ENCODE measurements at regions of chr17 and their contacts with region 1.

Region 1: GRCh38 chr17:40264458-40265185 is 23.1 kb upstream of the CDC6 start:
- DNase-seq: no peak
- H3K4me3 Mint-ChIP-seq: no peak overlapping the region
- H3K27ac Mint-ChIP-seq: no peak overlapping the region
- H3K4me1 Mint-ChIP-seq: no peaks in the 10 kb centered on the region
- H3K27me3 Mint-ChIP-seq: no peaks in the 10 kb centered on the region
- CTCF ChIP-seq: no peak

Region 2: DNA sequence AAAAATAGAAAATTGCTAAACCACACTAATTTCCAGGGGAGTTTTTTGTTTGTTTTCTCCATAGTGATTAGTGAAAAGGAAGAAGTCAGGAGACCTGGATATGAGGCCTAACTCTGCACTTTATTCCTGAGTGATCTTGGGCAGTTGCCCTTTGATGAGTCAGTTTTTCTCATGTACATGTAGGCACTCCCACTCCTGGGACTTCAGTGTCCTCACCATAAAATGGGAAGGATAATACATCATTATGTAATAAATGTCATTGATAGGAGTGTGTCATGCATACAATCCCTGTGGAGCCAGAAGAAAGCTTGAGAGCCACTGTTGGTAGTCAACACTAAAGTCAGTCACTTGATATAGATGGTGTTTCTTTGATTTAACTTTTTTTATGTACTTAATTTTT is 13.0 kb before region 1 on chr17:
- CTCF ChIA-PET with region 1: interaction called, 5 read pairs
- intact Hi-C with region 1: loop called (anchors 2 kb)
- DNase-seq: no peak
- H3K4me3 Mint-ChIP-seq: no peak overlapping the region
- H3K27ac Mint-ChIP-seq: peak overlapping the region; percentile 10
- H3K4me1 Mint-ChIP-seq: peaks cover 30% of the 10 kb centered on the region
- H3K27me3 Mint-ChIP-seq: no peaks in the 10 kb centered on the region
- CTCF ChIP-seq: no peak

Region 3: GRCh38 chr17:40714473-40714872 is 449.9 kb after region 1 on chr17:
- CTCF ChIA-PET with region 1: interaction called, 10 read pairs
- intact Hi-C with region 1: no loop called
- DNase-seq: no peak
- H3K4me3 Mint-ChIP-seq: no peak overlapping the region
- H3K27ac Mint-ChIP-seq: no peak overlapping the region
- H3K4me1 Mint-ChIP-seq: no peaks in the 10 kb centered on the region
- H3K27me3 Mint-ChIP-seq: peaks cover 60% of the 10 kb centered on the region
- CTCF ChIP-seq: peak; percentile 66